IMR-90 (cell line): ENCODE measurements at regions of chr19 and their contacts with region 1.

Region 1: DNA sequence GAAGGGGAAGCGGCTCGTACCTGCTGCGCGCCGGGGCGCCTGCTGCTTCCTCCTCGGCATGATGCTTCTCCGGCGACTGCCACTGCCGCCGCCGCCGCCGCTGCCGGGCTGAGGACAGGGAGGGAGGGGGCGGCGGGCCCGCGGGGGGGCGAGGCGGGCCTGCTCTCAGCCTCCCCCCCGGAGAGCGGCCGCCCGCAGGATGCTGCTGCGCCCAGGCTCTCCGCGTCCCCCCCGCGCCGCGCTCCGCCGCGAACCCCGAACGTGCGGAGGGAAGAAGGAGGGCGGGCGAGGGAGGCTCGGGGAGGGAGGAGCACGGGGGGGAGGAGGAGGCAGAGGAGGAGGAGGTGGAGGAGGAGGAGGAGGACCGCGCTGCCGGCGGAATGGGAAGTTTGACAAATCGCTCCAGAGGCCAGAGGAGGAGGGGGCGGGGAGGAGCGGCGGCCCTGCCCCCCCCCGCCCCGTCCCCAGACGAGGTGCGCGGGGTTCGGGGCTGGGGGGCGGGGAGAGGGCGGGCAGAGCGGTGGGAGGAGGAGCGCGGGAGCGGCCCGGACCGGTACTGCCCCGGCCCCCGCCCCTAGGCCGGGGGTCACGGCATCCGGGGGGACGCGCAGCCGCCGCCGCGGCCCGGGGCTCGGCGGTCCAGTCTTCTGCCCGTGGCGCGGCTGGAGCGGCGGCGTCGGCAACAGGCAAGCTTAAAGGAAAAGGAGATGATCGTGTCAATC is at the start of gene TSHZ3:
- DNase-seq: peak; percentile 87
- ATAC-seq: peak; percentile 69
- H3K4me3 ChIP-seq: peak within 1 kb of the TSS; percentile 93
- H3K27ac ChIP-seq: peak within 1 kb of the TSS; percentile 93
- H3K4me1 ChIP-seq: peaks cover 18% of the 10 kb centered on the region
- H3K27me3 ChIP-seq: no peaks in the 10 kb centered on the region
- CTCF ChIP-seq: no peak
- POLR2A ChIP-seq: 0 out of 2 replicates have a peak, but pooled peaks have one; percentile 21
- RAD21 ChIP-seq: no peak
- total RNA-seq, gene TSHZ3: 7.8 and 8.1 TPM in 2 replicates

Region 2: GRCh38 chr19:30682999-30683536 is 666.3 kb before region 1 on chr19:
- CTCF ChIA-PET with region 1: interaction called, 4 read pairs
- POLR2A ChIA-PET with region 1: no interaction called
- dilution Hi-C with region 1: no loop called
- in situ Hi-C with region 1: no loop called
- intact Hi-C with region 1: loop called (anchors 5 kb)
- DNase-seq: peak; percentile 82
- ATAC-seq: peak; percentile 97
- H3K4me3 ChIP-seq: no peak overlapping the region
- H3K27ac ChIP-seq: no peak overlapping the region
- H3K4me1 ChIP-seq: no peaks in the 10 kb centered on the region
- H3K27me3 ChIP-seq: peaks cover 11% of the 10 kb centered on the region
- CTCF ChIP-seq: peak; percentile 97
- POLR2A ChIP-seq: no peak; the same call in 1 of the 2 replicates
- RAD21 ChIP-seq: peak; percentile 90

Region 3: GRCh38 chr19:31110331-31110730 is 239.0 kb before region 1 on chr19:
- CTCF ChIA-PET with region 1: no interaction called
- POLR2A ChIA-PET with region 1: no interaction called
- dilution Hi-C with region 1: no loop called
- in situ Hi-C with region 1: no loop called
- intact Hi-C with region 1: loop called (anchors 1 kb)
- DNase-seq: peak; percentile 45
- ATAC-seq: peak; percentile 87
- H3K4me3 ChIP-seq: no peak overlapping the region
- H3K27ac ChIP-seq: no peak overlapping the region
- H3K4me1 ChIP-seq: 0 out of 2 replicates have a peak, but pooled peaks cover 2% of the 10 kb centered on the region
- H3K27me3 ChIP-seq: no peaks in the 10 kb centered on the region; the same call in 1 of the 2 replicates
- CTCF ChIP-seq: peak; percentile 59
- POLR2A ChIP-seq: no peak
- RAD21 ChIP-seq: peak; percentile 74

Region 4: GRCh38 chr19:31232181-31232580 is 117.1 kb before region 1 on chr19:
- CTCF ChIA-PET with region 1: no interaction called
- POLR2A ChIA-PET with region 1: no interaction called
- dilution Hi-C with region 1: no loop called
- in situ Hi-C with region 1: no loop called
- intact Hi-C with region 1: loop called (anchors 2 kb)
- DNase-seq: peak; percentile 72
- ATAC-seq: no peak
- H3K4me3 ChIP-seq: no peak overlapping the region
- H3K27ac ChIP-seq: peak overlapping the region; percentile 56
- H3K4me1 ChIP-seq: peaks cover 9% of the 10 kb centered on the region
- H3K27me3 ChIP-seq: no peaks in the 10 kb centered on the region
- CTCF ChIP-seq: no peak
- POLR2A ChIP-seq: no peak
- RAD21 ChIP-seq: peak; percentile 24

Region 5: DNA sequence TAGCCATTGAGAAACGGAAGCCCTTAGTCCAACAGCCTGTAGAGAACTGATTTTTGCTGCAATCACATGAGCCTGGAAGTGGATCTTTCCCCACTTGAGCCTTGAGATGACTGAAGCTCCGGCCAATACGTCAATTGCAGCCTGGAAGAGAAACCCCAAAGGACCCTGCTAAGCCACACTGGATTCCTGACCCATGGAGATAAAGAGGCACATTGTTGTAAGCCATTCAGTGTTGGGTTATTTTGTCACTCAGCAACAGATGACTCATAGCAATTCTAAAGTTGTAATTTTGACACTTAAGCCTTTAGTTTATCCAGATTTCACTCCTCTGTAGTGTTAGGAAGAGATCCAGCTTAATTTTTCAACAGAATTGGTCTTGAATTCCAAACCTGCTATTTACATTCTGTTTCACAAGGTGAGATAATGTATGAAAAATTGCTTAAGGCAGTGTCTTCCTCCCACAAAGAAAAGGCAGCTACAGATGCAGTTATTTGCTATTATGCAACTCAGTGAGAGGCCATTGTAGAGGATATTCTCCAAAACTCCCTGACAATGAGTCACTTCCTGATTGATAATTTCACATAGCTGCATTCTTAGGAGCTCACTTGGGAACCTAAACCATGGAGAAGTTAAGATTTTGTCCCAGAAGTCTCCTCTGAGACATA is 59.3 kb after region 1 on chr19:
- CTCF ChIA-PET with region 1: no interaction called
- POLR2A ChIA-PET with region 1: no interaction called
- dilution Hi-C with region 1: no loop called
- in situ Hi-C with region 1: no loop called
- intact Hi-C with region 1: loop called (anchors 2 kb)
- DNase-seq: peak; percentile 87
- ATAC-seq: peak; percentile 90
- H3K4me3 ChIP-seq: no peak overlapping the region
- H3K27ac ChIP-seq: no peak overlapping the region
- H3K4me1 ChIP-seq: peaks cover 7% of the 10 kb centered on the region
- H3K27me3 ChIP-seq: peaks cover 8% of the 10 kb centered on the region; the same call in 1 of the 2 replicates
- CTCF ChIP-seq: no peak
- POLR2A ChIP-seq: no peak
- RAD21 ChIP-seq: no peak

Region 6: DNA sequence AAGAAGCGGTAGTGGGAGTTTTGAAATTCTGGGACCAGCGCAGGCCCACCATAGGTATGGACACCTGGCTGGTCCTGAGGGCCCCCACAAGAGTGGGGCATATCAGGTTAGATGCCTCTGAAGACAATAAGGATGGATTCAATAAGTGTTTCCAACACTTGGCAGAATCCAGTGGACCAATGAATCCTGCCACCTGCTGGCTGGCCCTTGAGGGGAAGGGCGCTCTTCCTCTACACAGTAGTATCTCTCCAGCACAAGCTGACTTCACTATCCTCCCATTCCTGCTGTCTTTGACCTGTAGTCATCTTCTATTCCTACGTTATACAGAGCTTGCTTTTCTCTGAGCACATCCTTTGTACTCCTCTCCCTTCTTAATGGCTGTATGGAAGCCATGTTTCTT is 199.6 kb after region 1 on chr19:
- CTCF ChIA-PET with region 1: no interaction called
- POLR2A ChIA-PET with region 1: no interaction called
- dilution Hi-C with region 1: no loop called
- in situ Hi-C with region 1: no loop called
- intact Hi-C with region 1: loop called (anchors 5 kb)
- DNase-seq: peak; percentile 44
- ATAC-seq: peak; percentile 65
- H3K4me3 ChIP-seq: no peak overlapping the region
- H3K27ac ChIP-seq: no peak overlapping the region
- H3K4me1 ChIP-seq: no peaks in the 10 kb centered on the region
- H3K27me3 ChIP-seq: peaks cover 3% of the 10 kb centered on the region; the same call in 1 of the 2 replicates
- CTCF ChIP-seq: peak; percentile 65
- POLR2A ChIP-seq: no peak
- RAD21 ChIP-seq: peak; percentile 72